ENCODE measurements at regions of chr1 and their contacts with region 1.

Region 1: GRCh38 chr1:205273551-205273982 is 45.8 kb downstream of the TMCC2 start:
- DNase-seq: peak; percentile 91
- ATAC-seq: peak; percentile 88

Region 2: DNA sequence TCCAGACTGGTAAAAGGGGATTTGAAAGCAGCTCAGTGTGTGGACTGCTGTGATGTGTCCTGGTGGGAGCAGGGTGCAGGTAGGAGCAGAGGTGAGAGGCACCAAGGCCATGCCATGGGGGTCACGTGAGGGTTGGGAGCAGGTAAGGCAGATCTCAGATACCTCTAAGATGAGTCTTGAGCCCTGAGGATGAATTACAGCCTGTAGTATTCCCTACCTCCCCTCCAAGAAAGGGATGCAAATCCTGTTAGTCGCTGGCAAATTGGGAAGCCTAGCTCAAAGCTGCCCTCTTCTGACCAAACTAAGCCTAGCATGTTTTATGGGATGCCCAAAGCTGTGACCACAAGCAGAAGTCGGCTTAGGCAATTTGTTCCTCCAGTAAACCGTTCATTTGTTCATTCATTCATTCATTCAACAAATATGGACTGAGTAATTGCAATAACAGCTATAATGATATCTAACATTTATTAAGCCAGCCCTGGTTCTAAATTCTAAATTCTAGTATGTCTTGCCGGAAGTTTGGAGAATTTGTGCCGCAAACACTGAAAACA is 51.8 kb after region 1 on chr1:
- intact Hi-C with region 1: loop called (anchors 1 kb)
- DNase-seq: no peak
- ATAC-seq: peak; percentile 33

Measured in Right ventricle myocardium superior (tissue), 1 donor.